ENCODE measurements at regions of chr2 and their contacts with region 1.

Region 1: DNA sequence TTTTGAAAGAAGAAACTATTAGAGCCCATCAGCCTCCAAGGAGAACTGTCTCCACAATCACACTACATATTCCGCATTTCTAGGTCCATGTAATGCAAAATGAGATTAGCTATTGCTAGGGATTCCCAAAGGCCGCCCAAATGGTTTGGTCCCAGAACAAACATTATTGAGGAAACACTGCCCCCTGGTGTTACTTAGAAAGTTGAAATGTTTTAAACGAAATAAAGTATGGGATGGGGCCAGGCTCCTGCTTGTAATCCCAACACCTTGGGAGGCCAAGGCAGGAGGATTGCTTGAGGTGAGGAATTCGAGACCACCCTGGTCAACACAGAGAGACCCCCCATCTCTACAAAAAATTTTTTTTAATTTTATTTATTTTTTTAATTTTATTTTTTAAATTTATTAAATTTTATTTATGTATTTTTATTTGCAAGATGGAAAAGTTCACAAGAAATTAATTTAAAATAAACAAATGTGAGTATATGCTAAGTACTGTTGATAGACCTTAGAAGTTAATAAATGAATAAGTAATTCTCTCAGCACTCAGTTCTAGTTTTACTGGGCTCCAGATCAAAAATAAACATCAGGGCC is 5.5 kb downstream of the NHEJ1 start:
- DNase-seq: peak; percentile 84
- H3K4me3 Mint-ChIP-seq: no peak overlapping the region
- H3K27ac Mint-ChIP-seq: no peak overlapping the region
- H3K4me1 Mint-ChIP-seq: peaks cover 8% of the 10 kb centered on the region
- H3K27me3 Mint-ChIP-seq: no peaks in the 10 kb centered on the region

Region 2: GRCh38 chr2:219029829-219030165 is 125.4 kb before region 1 on chr2:
- intact Hi-C with region 1: loop called (anchors 1 kb)
- DNase-seq: peak; percentile 93
- H3K4me3 Mint-ChIP-seq: no peak overlapping the region
- H3K27ac Mint-ChIP-seq: no peak overlapping the region
- H3K4me1 Mint-ChIP-seq: no peaks in the 10 kb centered on the region
- H3K27me3 Mint-ChIP-seq: peaks cover 13% of the 10 kb centered on the region

Measured in activated CD4-positive, alpha-beta T cell treated with anti-CD3 and anti-CD28 coated beads, Interleukin-2, amount 10 ng/mL, durations not matched to agents 24 days and 14 days (primary cell).